Panc1 (cell line): ENCODE measurements at regions of chr2 and their contacts with region 1.

Region 1: DNA sequence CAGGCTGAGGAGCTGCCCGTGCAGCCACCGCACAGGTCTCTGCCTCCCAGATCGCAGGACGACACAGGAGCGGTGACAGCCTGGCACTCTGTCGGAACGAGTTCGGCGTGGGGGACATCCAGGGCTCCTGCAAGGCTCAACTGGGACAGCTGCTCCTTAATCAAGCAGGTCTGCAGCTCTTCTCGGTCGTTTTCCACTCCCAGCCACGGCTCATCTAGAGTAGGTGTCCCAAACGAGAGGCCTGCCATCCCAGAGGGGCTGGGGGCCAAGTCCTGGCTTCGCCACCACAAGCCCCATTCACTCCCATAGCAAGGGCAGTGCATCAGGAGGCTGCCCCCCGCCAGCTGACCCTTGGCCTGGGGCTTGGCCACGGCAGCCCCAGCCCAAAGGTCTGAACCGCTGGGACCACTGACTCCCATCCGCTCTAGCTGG is 22.5 kb downstream of the PASK start:
- DNase-seq: no peak
- ATAC-seq: no peak
- H3K4me3 ChIP-seq: no peak overlapping the region
- H3K27ac ChIP-seq: no peak overlapping the region
- H3K4me1 ChIP-seq: no peaks in the 10 kb centered on the region
- H3K27me3 ChIP-seq: no peaks in the 10 kb centered on the region
- CTCF ChIP-seq: no peak

Region 2: DNA sequence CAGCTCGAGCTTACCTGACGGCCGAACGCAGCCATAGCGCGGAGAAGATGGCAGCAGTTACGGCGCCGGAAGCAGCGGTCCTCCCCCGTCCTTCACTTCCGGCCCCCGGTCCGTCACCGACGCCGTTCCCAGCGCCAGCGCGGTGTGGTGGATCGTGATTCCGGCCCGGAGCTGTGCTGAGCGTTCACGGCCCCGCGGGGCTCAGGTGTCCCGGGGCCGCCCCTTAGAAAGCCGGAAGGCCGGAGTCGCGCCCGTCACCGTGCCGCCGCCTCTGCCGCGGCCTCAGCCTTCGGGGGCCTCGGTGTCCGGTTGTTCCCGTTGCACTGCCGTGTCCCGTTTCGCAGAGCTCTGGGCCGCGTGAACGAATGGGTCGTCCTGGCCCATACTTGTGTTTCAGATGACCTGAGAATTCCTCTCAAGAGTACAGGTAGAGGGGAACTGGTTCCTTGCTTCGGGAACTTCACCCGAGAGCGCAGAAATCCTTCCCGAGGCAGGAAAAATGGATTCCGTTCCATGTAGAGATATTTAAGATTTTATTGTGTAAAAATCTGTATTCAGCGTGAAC is 24.5 kb before region 1 on chr2 and contains the start of gene MTERF4:
- CTCF ChIA-PET with region 1: no interaction called
- POLR2A ChIA-PET with region 1: interaction called, 10 read pairs
- in situ Hi-C with region 1: no loop called
- intact Hi-C with region 1: no loop called
- DNase-seq: peak; percentile 25
- ATAC-seq: peak; percentile 100
- H3K4me3 ChIP-seq: peak within 1 kb of the TSS; percentile 75 to 87
- H3K27ac ChIP-seq: peak within 1 kb of the TSS; percentile 95
- H3K4me1 ChIP-seq: peaks cover 9% of the 10 kb centered on the region
- H3K27me3 ChIP-seq: no peaks in the 10 kb centered on the region
- CTCF ChIP-seq: no peak
- total RNA-seq, gene MTERF4: 28.9 TPM